Cardiac septum (tissue), 1 donor: ENCODE measurements at regions of chr10 and their contacts with region 1.

Region 1: DNA sequence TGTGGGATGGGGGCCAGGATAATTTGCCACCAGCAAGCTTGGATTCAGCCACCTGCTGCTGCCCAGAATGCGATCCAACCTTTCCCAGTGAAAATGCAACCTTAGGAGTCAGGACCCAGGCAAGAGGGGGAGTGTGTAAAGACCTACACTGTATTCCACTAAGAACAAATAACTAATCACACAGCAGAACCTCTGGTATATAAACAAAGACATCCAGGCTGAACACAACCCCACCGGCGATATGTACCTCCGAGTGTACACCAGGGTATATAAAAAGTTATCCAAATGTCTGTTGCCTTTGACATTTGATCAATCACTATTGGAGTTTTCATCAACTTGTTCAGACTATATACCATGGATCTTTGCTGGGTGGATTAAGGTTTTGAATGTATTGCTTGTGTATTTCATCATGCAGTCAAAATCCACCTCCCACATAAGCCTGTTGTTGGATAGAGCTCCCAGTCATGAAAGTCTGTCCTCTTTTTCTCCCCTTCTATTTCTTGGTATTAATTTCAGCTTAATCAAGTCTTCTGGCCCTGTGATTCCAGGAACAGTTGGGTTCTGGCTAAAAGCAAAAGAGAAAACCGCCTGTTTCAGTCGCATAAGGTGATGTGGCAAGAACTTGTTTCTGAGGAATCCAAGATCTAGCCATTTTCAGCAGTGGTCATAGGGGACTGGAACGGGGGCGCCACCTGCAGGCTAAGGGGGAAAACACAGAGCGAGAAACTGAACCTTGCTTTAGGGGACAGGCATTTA is 290.7 kb downstream of the CCDC3 start:
- DNase-seq: peak; percentile 88

Region 2: DNA sequence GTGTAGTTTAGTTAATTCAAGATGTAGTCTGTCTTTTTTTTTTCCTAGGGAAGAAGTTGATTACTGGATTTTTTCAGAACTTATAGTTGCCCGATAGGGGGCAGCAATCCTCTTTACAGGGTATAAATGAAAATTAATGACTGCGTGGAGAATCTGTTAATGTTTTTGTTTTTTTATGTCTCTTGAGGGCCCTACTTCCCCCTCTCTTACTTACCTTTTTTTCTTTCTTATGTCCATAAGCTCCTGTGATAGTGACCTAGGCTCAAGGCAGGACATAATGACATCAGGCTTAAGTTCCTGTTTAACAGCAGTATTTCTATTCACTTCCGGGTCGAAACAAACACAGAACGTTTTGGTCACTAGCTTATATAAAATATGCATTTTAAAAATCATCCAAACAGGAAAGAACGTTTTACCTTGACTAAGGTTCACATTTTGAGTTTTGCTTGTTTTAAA is 496.0 kb before region 1 on chr10:
- intact Hi-C with region 1: loop called (anchors 5 kb)
- DNase-seq: no peak

Region 3: DNA sequence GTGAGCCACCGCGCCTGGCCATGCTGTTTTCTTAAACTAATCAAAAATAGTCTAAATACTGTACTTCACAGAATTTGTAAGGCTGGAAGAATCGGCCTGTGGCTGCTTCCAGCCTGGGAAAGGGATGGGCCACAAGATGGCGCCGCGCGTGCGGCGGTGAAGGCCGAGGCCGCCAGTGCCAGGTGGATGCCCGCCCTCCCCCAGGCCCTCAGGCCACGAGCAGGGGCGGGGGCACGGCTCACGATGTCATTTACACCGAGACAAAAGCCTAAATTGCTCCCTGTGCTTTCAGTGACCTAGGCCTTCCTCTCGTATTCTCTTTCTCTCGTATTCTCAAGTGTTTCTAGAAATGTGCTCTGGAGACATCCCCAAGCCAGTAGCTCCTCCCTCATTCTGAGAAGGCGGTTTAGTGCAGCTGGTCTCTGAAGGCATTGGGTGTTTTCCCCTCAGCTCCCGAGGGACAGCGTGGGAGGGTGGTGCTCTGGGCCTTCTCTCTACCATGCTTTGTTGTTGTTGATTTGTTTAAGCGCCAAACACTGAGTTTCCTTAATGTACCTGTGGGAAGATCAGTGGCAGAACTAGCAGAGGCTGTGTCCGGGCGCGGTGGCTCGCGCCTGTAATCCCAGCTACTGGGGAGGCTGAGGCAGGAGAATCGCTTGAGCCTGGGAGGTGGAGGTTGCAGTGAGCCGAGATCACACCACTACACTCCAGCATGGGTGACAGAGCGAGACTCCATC is 446.4 kb before region 1 on chr10:
- intact Hi-C with region 1: loop called (anchors 2 kb)
- DNase-seq: peak; percentile 92

Region 4: GRCh38 chr10:12902135-12902572 is 191.4 kb after region 1 on chr10:
- intact Hi-C with region 1: loop called (anchors 10 kb)
- DNase-seq: no peak

Region 5: DNA sequence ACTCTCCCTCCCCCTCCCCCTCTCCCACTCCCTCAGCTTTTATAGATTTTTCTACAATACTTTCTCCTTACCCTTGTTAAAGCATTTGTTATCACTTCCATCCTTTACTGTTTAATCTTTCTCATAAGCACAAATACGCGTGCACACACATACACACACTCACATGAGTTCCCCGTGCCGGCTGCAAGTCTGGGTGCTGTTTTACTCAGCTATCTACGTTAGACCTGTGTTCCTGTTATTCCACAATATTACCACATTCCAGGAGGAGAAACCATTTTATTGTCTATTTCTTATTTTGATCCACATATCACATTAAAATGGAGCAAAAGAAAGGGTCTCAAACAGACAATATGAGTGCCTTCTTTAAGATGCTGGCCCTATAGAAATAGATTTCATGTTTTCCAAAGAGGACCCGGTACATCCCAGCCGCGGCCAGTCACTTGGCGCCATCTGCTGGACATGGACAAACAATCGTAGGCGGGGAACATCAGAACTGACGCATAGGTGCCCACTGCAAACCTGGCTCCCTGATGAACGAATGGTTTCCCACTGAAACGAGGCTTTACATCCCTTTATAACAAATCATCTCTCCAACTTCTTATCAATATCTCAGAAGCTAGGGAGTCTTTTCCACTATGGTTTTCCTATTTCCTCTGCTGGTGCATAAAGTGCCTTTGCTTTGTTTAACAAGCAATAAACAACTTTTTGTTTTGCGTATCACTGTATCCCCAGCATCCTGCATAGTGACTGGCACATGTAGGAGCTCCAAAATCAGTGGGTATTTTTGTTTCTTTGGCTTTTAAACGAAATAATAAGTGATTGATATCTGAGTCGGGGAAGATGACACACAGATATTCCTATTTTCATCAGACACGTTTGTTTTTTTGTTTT is 364.0 kb after region 1 on chr10:
- intact Hi-C with region 1: loop called (anchors 10 kb)
- DNase-seq: no peak